ENCODE measurements at regions of chr20 and their contacts with region 1.

Region 1: GRCh38 chr20:41329435-41330342 is 10.9 kb upstream of the LPIN3 start:
- DNase-seq: peak; percentile 90
- ATAC-seq: peak; percentile 94
- H3K4me3 ChIP-seq: 0 out of 4 replicates have a peak overlapping the region, but pooled peaks of 1 of the 2 experiments have one; percentile 1
- H3K27ac ChIP-seq: peak overlapping the region; percentile 69
- H3K4me1 ChIP-seq: peaks cover 7% of the 10 kb centered on the region
- H3K27me3 ChIP-seq: no peaks in the 10 kb centered on the region
- CTCF ChIP-seq: no peak

Region 2: GRCh38 chr20:40980106-40980827 is 349.4 kb before region 1 on chr20:
- CTCF ChIA-PET with region 1: no interaction called
- POLR2A ChIA-PET with region 1: no interaction called
- in situ Hi-C with region 1: no loop called
- intact Hi-C with region 1: loop called (anchors 5 kb)
- DNase-seq: no peak
- ATAC-seq: no peak
- H3K4me3 ChIP-seq: no peak overlapping the region
- H3K27ac ChIP-seq: no peak overlapping the region
- H3K4me1 ChIP-seq: no peaks in the 10 kb centered on the region
- H3K27me3 ChIP-seq: no peaks in the 10 kb centered on the region
- CTCF ChIP-seq: no peak

Region 3: DNA sequence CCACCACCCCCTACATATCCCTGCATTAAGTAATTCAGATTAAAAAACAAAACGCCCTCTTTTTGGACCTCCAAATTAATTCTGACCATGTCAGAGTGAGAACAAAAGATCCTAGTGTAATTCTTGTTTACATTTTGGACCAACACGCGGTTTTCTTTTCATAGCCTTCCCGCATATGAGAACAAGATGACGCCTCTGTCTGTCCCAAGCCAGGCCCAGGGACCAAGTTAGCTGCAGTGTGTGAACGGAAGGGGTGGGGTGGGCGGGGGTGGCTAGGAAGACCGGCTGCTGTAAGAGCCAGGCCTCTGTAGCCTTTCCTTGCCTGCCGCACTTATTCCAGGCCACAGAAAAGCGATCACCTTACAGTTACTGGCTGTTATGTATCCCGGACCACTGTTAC is 124.4 kb before region 1 on chr20:
- CTCF ChIA-PET with region 1: no interaction called
- POLR2A ChIA-PET with region 1: no interaction called
- in situ Hi-C with region 1: no loop called
- intact Hi-C with region 1: no loop called
- DNase-seq: no peak
- ATAC-seq: no peak
- H3K4me3 ChIP-seq: no peak overlapping the region
- H3K27ac ChIP-seq: no peak overlapping the region
- H3K4me1 ChIP-seq: no peaks in the 10 kb centered on the region
- H3K27me3 ChIP-seq: no peaks in the 10 kb centered on the region
- CTCF ChIP-seq: no peak

Region 4: GRCh38 chr20:42576191-42576590 is 1246.5 kb after region 1 on chr20:
- CTCF ChIA-PET with region 1: no interaction called
- POLR2A ChIA-PET with region 1: no interaction called
- in situ Hi-C with region 1: no loop called
- intact Hi-C with region 1: no loop called
- DNase-seq: no peak
- ATAC-seq: no peak
- H3K4me3 ChIP-seq: no peak overlapping the region
- H3K27ac ChIP-seq: no peak overlapping the region
- H3K4me1 ChIP-seq: no peaks in the 10 kb centered on the region
- H3K27me3 ChIP-seq: no peaks in the 10 kb centered on the region
- CTCF ChIP-seq: no peak